ENCODE measurements at regions of chr3 and their contacts with region 1.

Region 1: DNA sequence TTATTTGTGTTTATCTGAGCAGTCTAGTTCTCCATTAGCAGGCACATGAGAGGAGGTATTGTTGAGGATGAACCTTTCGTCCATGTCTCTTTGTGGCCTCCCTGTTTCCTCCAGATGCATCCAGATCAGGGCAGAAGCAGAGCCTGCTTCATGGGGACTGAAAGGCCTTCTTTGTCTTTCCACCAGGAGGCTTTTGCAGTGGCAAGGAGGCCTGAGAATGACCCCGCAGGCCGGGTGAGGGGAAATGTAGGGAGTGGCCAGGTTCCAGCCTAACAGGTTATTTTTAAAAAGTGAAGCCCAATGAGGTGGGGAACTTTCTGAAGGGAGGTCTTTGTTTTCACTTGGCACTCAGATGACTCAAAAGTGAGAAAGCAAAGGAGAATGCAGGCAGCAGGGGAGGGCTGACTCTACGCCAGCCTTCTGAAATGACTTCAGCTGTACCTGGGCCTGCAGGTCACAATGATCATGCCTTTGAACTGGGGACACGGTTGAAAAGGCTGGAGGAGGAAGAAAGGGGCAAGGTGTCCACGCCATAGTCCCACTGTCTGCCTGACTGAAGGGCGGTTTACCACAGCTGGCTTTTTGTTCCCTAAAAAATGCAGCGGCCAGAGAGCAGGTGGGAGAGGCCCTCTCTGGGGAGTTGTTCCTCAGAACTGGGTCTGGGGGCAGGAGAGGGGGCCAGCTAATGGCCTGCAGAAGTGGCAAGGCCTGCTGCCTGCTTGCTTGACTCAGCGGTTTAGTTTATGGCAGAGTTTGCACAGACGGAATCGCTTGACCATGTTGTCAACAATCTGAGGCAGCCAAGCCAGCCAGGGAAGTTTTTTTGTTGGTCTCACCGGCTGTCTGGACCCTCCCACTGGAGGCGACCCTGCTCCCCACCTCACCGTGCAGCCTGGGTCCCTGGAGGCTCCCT is 28.7 kb downstream of the CMTM7 start:
- DNase-seq: peak; percentile 60
- H3K4me3 Mint-ChIP-seq: no peak overlapping the region
- H3K27ac Mint-ChIP-seq: peak overlapping the region; percentile 10
- H3K4me1 Mint-ChIP-seq: peaks cover 28% of the 10 kb centered on the region
- H3K27me3 Mint-ChIP-seq: no peaks in the 10 kb centered on the region
- CTCF ChIP-seq: no peak

Region 2: DNA sequence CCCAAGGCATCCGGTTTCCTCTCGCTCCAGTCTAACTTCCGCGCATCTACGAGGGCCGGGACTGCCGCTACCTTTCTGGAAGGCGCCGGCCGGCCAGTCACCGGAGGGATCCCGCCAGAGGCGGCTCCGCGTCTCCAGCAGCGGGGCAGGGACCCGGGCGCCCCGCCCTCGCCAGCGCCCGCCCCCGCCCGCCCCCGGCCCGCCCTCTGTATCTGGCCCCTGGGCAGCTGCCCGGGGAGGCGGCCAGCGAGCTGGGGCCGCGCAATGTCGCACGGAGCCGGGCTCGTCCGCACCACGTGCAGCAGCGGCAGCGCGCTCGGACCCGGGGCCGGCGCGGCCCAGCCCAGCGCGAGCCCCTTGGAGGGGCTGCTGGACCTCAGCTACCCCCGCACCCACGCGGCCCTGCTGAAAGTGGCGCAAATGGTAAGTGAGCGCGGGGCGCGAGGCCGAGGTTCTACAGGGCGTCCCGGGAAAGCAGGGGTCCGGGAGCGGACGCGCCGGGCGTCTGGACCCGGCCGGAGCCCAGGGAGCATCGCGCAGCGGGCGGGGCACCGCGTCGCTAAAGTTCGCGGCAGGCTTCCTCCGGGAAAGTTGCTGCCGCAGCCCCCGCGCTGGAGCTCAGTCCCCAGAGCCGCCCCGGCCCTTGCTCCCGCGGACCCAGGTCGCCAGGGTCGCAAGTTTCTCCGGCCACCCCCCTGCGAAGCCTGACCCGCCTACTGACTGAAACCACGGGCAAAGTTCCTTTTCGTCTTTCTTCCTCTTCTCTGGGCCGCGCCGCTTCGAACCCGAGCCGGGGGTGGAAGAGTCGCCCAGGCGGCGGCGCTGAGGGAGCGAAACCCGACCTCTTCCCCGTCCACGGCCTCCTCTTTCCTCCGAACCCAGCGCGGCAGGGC is 28.5 kb before region 1 on chr3 and contains the start of gene CMTM7:
- CTCF ChIA-PET with region 1: interaction called, 3 read pairs
- POLR2A ChIA-PET with region 1: interaction called, 11 read pairs
- intact Hi-C with region 1: no loop called
- DNase-seq: peak; percentile 67
- H3K4me3 Mint-ChIP-seq: peak within 1 kb of the TSS; percentile 80
- H3K27ac Mint-ChIP-seq: peak within 1 kb of the TSS; percentile 20
- H3K4me1 Mint-ChIP-seq: peaks cover 6% of the 10 kb centered on the region
- H3K27me3 Mint-ChIP-seq: no peaks in the 10 kb centered on the region
- CTCF ChIP-seq: no peak
- total RNA-seq, gene CMTM7: 9.7 and 14.3 TPM in 2 replicates

Region 3: GRCh38 chr3:32406486-32407408 is 13.6 kb before region 1 on chr3:
- CTCF ChIA-PET with region 1: interaction called, 4 read pairs
- POLR2A ChIA-PET with region 1: interaction called, 23 read pairs
- intact Hi-C with region 1: no loop called
- DNase-seq: peak; percentile 77
- H3K4me3 Mint-ChIP-seq: no peak overlapping the region
- H3K27ac Mint-ChIP-seq: peak overlapping the region; percentile 95
- H3K4me1 Mint-ChIP-seq: peaks cover 25% of the 10 kb centered on the region
- H3K27me3 Mint-ChIP-seq: no peaks in the 10 kb centered on the region
- CTCF ChIP-seq: no peak

Measured in MCF 10A (cell line).